WTC11 (cell line): ENCODE measurements at regions of chr4 and their contacts with region 1.

Region 1: GRCh38 chr4:94621491-94622080 is 136.2 kb upstream of the BMPR1B start:
- DNase-seq: no peak
- ATAC-seq: no peak
- H3K4me3 Mint-ChIP-seq: no peak overlapping the region
- H3K27ac Mint-ChIP-seq: no peak overlapping the region
- H3K4me1 Mint-ChIP-seq: no peaks in the 10 kb centered on the region
- H3K27me3 Mint-ChIP-seq: no peaks in the 10 kb centered on the region
- CTCF ChIP-seq: peak; percentile 69

Region 2: DNA sequence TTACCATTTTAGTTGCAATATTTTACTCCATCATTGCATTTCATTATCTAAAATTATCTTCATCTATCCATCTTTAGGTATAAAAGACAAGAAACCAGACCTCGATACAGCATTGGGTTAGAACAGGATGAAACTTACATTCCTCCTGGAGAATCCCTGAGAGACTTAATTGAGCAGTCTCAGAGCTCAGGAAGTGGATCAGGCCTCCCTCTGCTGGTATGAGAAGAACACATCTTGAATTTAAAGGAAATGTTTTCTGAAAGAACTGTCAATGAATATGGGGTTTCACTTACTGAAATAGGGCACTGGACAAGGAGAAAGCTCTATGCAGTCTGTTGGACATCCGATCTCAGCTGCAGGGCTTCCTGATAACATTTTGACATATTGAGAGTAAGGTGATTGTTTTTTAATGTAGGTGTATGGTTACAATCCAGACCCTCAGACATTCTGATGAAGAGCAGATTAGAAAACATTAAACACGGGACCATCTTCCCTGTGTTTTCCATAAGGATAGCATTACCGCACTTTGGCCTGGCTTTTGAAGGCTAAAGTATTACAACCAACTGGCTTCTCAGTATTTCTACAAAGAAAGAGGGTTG is 503.4 kb after region 1 on chr4:
- CTCF ChIA-PET with region 1: interaction called, 10 read pairs
- POLR2A ChIA-PET with region 1: no interaction called
- DNase-seq: peak; percentile 28
- ATAC-seq: peak; percentile 85
- H3K4me3 Mint-ChIP-seq: no peak overlapping the region
- H3K27ac Mint-ChIP-seq: no peak overlapping the region
- H3K4me1 Mint-ChIP-seq: no peaks in the 10 kb centered on the region
- H3K27me3 Mint-ChIP-seq: no peaks in the 10 kb centered on the region
- CTCF ChIP-seq: no peak